Right ventricle myocardium inferior (tissue), 1 donor: ENCODE measurements at regions of chr3 and their contacts with region 1.

Region 1: DNA sequence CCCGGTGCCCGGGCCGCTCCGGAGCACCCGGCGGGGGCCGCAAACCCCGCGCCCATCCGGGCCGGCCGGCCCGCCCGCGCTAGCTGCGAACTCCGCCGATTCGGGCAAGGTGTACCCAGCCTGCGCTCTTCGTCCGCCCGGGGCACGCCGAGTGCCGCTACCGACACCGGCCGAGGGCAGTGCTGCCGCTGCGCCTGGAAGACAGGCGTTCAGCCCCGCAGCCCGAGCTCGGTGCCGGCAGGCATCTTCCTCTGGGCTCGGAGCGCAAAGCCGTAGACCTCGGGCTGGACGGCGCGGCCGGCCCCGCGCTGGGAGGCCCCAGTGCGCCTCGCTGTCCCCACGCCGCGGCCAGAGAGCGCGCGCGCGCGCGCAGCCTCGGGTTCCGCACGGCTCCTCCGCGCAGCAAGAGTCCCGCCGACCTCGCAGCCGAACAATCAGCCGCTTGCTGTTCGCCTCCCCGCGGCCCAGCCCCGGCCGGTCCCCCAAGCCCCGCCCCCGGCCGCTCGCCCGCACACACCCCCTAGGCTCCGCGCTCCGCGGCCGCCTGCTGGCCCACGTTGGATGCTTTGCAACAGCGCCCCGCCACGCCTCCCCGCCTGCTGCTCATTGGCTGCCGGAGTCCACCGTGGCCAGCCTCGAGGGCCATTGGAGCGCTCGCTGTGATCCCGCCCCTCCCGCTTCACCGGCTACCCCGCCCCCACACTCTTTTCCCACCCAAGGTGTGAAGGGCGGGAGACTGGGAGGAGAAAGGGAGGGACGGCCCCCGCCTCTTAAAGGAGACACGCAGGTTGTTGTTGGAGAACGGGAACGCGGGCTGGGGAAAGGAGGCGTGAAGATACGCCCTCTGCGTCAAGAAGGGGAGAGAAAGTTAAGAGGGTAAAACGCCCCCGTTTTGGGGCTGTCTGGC is at the start of gene LRIG1:
- DNase-seq: peak; percentile 100
- ATAC-seq: peak; percentile 99
- total RNA-seq, gene LRIG1: 93.8 TPM

Region 2: DNA sequence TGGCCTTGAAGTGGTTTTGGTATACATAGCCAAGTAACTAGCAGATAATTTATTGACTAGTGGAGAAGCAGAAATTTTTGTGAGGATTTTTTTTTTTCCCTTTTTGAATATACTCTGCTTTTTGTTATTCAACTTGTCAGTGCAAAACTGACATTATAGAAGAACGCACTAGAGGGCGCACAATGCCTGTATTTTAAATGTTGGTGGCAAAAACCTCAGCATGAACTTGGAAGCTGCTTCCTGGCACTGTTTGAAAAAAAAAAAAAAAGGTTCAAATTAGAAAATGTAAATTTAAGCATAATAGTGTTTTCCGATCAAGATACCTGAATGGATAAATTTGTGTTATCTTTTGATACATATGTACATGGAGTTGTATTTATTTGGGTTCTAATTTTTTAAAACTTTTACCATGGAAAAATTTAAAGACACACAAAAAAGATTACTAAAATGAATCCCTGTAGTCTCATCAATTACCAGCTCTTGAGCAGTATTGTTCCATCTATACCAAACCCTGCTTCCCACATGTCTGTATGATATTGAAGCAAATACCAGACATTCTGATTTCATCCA is 224.0 kb before region 1 on chr3:
- intact Hi-C with region 1: loop called (anchors 5 kb)
- DNase-seq: no peak
- ATAC-seq: no peak

Region 3: GRCh38 chr3:66407611-66408218 is 93.1 kb before region 1 on chr3:
- intact Hi-C with region 1: loop called (anchors 2 kb)
- DNase-seq: peak; percentile 85
- ATAC-seq: peak; percentile 62

Region 4: GRCh38 chr3:66450390-66451022 is 50.3 kb before region 1 on chr3:
- intact Hi-C with region 1: loop called (anchors 2 kb)
- DNase-seq: no peak
- ATAC-seq: peak; percentile 52

Region 5: DNA sequence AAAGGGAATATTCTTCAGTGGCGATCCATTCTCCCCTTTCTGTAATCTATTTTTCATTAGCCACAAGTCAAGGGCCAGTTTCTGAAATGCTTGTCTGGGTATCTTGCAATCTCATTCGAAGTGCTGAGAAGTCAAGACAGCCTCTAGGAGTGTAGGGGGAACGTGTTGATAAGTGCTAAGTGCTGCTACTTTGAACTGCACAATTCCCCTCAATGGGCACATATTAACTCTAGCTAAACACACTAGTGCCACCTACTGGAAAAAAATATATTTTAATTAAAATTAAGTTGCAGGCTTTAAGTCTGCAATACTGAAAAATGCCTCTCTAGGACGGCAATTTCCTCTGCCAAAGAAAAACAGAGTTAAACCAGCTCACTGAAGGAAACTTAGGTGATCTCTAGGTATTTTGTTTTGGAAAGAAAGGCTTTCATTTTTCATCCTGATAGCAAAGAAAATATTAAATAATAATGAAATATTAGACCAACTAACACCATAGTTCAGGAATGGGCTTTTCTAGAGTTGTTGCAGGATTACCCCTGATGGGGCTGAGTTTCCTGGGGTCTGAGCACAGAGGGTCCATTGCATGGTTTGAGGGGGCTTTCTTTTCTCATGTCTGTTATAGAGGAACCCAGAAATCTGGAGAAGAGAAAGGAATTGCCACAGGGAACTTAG is 315.4 kb after region 1 on chr3:
- intact Hi-C with region 1: loop called (anchors 5 kb)
- DNase-seq: no peak
- ATAC-seq: peak; percentile 75